Endothelial cell of umbilical vein (primary cell): ENCODE measurements at regions of chr2 and their contacts with region 1.

Region 1: DNA sequence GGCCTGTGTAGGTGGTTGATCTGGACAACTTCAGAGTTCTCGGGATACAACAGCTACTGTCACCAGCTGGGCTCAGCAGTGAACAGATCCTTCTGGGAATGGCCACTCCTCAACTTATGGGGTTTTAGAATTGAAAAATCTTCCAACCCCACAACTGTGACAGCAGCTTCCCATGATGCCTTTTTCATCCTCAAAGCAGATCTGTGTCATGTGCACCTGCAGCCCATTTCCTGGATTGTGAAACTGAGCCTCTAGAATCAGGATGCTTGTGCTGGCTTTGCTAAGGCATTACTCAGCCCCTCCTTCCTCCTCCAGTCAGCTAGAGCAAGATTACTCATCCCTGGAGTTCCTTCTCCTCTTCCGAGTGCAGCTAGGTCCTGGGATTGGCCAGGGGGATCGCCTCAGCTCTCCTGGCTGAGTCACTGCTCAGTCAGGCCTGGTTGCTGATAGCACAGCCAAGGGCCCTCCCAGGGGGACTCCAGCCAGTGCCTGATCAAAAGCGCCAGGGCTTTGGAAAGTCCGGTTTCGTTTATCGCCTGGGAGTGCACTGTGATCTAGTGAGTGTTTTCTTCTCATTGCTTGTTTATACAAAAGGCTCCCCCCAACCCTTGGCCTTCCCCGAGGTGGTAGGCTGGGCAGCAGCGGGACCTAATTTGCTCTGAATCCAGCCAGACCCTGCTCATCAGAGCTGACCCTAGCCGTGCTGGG is 2.4 kb upstream of the LPIN1 start:
- DNase-seq: peak; percentile 99
- H3K4me3 ChIP-seq: peak overlapping the region in 1 of 3 experiments; percentile 20
- H3K27ac ChIP-seq: peak overlapping the region; percentile 82
- H3K4me1 ChIP-seq: peaks cover 55% of the 10 kb centered on the region
- H3K27me3 ChIP-seq: no peaks in the 10 kb centered on the region
- CTCF ChIP-seq: no peak
- POLR2A ChIP-seq: no peak

Region 2: GRCh38 chr2:11465497-11466406 is 278.2 kb before region 1 on chr2 and contains the start of gene E2F6:
- CTCF ChIA-PET with region 1: no interaction called
- POLR2A ChIA-PET with region 1: no interaction called
- dilution Hi-C with region 1: no loop called
- intact Hi-C with region 1: loop called (anchors 10 kb)
- DNase-seq: peak; percentile 93
- H3K4me3 ChIP-seq: peak within 1 kb of the TSS; percentile 45 to 82 (median 46)
- H3K27ac ChIP-seq: peak within 1 kb of the TSS; percentile 73
- H3K4me1 ChIP-seq: peaks cover 21% of the 10 kb centered on the region
- H3K27me3 ChIP-seq: no peaks in the 10 kb centered on the region
- CTCF ChIP-seq: no peak
- POLR2A ChIP-seq: no peak
- total RNA-seq, gene E2F6: 14.6 and 15.7 TPM in 2 replicates

Region 3: DNA sequence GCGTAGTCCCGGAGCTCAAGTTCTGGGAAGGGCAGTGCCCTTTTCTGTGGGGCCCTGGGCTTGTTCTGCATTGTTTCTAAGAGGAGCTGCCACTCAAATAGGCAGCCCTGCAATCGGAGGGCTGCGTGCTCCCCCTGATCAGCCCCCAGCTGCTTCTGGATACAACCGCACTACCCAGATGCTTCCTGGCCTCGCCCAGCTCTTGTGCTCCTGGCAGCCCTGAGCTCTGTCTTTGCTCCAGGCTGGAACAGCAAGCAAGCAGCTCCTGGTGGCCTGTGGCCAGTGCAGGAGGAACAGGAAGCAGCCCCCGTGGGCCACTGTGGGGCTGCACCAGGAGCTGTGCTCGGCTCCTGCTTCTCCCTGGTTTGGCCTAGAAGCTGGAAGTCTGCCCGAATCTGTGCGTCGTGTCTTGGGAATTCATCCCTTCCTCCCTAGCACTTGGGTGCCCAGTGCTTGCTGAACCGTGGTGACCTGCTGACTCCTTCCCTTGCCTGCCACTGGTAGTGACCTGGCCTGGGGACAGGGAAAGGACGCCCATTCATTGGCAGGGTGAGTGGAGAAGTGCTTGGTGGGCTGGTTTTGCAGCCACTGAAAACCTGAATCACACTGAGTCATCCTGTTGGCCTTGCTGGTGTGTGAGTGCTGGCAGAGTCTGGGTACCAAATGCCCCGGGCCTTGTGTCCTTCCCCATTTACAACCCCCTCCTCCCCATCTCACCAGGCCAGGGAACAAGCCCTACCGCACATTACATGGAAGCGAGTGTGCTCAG is 46.7 kb before region 1 on chr2:
- CTCF ChIA-PET with region 1: interaction called, 21 read pairs
- POLR2A ChIA-PET with region 1: interaction called, 4 read pairs
- dilution Hi-C with region 1: no loop called
- intact Hi-C with region 1: loop called (anchors 1 kb)
- DNase-seq: peak; percentile 70
- H3K4me3 ChIP-seq: no peak overlapping the region
- H3K27ac ChIP-seq: no peak overlapping the region
- H3K4me1 ChIP-seq: peaks cover 11% of the 10 kb centered on the region
- H3K27me3 ChIP-seq: no peaks in the 10 kb centered on the region
- CTCF ChIP-seq: no peak
- POLR2A ChIP-seq: no peak

Region 4: DNA sequence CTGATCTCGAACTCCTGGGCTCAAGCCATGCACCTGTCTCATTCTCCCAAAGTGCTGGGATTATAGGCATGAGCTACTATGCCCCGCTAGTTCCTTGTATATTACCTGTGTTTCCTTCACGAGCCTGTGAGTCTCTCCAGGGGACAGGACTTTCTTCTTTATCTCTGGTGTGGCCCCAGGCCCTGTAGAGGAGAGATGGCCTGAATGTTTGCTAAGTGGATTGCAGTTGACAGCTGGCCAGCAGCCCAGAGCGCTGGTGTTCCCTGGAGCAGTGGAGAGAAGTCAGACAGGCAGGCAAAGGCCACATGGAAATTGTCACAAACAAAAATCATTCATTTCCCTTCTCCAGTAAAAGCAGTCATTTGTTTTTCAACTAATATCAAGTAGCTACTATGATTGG is 20.4 kb after region 1 on chr2:
- CTCF ChIA-PET with region 1: interaction called, 6 read pairs
- POLR2A ChIA-PET with region 1: interaction called, 3 read pairs
- dilution Hi-C with region 1: no loop called
- intact Hi-C with region 1: loop called (anchors 1 kb)
- DNase-seq: no peak
- H3K4me3 ChIP-seq: no peak overlapping the region
- H3K27ac ChIP-seq: no peak overlapping the region
- H3K4me1 ChIP-seq: peaks cover 5% of the 10 kb centered on the region
- H3K27me3 ChIP-seq: no peaks in the 10 kb centered on the region
- CTCF ChIP-seq: no peak
- POLR2A ChIP-seq: no peak